ENCODE measurements at regions of chr11 and their contacts with region 1.

Region 1: DNA sequence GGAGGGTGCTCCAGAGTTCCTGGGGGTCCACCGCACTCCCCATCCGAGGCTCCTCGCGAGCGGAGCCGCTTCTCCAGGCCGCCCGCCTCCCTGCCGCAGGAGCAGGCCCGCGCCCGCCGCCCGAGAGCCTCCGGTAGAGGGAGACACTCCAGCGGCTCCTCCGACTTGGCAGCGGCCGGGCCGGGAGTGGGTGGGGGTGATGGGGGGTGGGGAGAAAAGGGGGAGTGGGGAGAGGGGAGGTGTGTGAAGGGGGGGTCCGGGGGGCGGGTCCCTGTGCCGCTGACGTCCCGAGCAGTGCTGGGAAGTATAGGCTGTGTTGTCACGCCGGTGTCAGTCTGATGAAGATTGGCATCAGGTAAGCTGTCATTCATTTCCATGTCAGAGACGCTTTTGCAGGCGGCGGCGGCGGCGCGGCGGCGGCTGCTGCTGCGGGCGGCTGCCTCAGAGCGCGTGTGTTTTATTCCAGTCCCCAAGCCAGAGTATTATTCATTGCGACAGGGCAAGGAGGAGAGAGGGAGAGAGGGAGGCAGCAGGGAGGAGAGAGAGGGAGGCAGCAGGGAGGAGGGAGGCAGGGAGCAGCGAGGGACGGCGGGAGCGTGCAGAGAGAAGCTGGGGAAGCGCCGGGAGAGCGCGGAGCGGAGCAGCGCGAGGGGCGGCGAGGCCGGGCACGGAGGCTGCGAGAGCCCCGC is at the start of gene PKNOX2:
- DNase-seq: peak; percentile 42 to 78 (median 53)
- H3K4me3 ChIP-seq: peak within 1 kb of the TSS in 1 of 2 donors; percentile 41
- H3K4me3 Mint-ChIP-seq: peak within 1 kb of the TSS; percentile 89 to 100 (median 91)
- H3K27ac ChIP-seq: no peak within 1 kb of the TSS
- H3K27ac Mint-ChIP-seq: peak within 1 kb of the TSS in 3 of 7 donors; percentile 23 to 78 (median 70)
- H3K4me1 ChIP-seq: peaks cover 22% of the 10 kb centered on the region
- H3K4me1 Mint-ChIP-seq: peaks cover 15 to 40% (median 22%) of the 10 kb centered on the region in 4 donors
- H3K27me3 ChIP-seq: peaks cover 33% of the 10 kb centered on the region
- H3K27me3 Mint-ChIP-seq: peaks cover 44 to 46% of the 10 kb centered on the region in 2 donors
- total RNA-seq, gene PKNOX2: not detected

Region 2: DNA sequence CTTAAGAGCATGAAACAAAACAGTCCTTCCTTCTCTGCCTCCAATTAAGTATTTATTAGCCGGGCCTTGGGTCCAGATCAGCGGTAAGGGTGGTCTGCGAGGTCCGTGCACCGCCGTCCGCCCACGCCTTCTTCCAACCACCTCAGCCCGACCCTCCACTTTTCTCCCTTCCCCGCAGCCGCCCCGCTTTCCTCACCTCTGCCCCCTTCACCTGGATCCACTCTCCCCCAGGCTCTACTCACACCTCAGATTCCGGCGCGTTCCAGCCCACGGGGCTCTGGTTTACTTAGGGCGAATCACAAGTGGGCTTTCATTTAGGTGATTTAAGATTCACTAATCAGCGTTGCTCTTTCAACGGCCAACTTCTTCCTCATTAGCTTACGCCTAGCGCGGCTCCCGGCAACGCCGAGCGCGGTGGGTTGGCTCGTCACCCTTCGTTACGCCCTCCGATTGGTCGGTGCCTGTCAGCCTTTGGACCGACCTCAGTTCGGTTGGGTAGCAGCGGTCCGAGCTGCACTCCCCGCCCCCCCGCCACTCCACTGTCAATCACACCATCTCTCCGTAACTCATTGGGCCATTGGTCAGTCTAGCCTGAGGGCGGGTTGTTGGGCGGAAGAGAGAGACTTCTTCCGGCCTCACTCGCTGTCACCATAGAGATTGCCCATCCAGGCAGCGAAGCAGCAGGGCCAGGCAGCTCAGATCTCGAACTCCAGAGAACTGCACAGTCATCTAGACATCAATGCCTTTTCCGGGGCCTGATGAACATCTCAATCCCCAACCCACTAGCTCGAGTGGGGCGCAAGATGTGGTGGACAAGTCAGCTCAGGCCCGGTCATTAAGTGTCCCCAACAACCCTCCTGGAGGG is 53.0 kb before region 1 on chr11 and contains the start of gene TMEM218:
- CTCF ChIA-PET with region 1: no interaction called
- POLR2A ChIA-PET with region 1: interaction called, 4 read pairs
- intact Hi-C with region 1: loop called (anchors 2 kb)
- DNase-seq: peak; percentile 94 to 97 (median 96)
- H3K4me3 ChIP-seq: peak within 1 kb of the TSS; percentile 72 to 89
- H3K4me3 Mint-ChIP-seq: peak within 1 kb of the TSS; percentile 92 to 100 (median 98)
- H3K27ac ChIP-seq: peak within 1 kb of the TSS; percentile 68
- H3K27ac Mint-ChIP-seq: peak within 1 kb of the TSS; percentile 74 to 99 (median 97)
- H3K4me1 ChIP-seq: peaks cover 18% of the 10 kb centered on the region
- H3K4me1 Mint-ChIP-seq: peaks cover 4 to 25% (median 18%) of the 10 kb centered on the region in 4 donors
- H3K27me3 ChIP-seq: no peaks in the 10 kb centered on the region
- H3K27me3 Mint-ChIP-seq: no peaks in the 10 kb centered on the region
- total RNA-seq, gene TMEM218: 15.1 to 16.6 TPM

Region 3: GRCh38 chr11:125180413-125181305 is 16.1 kb after region 1 on chr11:
- CTCF ChIA-PET with region 1: no interaction called
- POLR2A ChIA-PET with region 1: no interaction called
- intact Hi-C with region 1: no loop called
- DNase-seq: no peak
- H3K4me3 ChIP-seq: no peak overlapping the region
- H3K4me3 Mint-ChIP-seq: no peak overlapping the region
- H3K27ac ChIP-seq: no peak overlapping the region
- H3K27ac Mint-ChIP-seq: peak overlapping the region in 1 of 7 donors; percentile 44
- H3K4me1 ChIP-seq: no peaks in the 10 kb centered on the region
- H3K4me1 Mint-ChIP-seq: no peaks in the 10 kb centered on the region
- H3K27me3 ChIP-seq: no peaks in the 10 kb centered on the region
- H3K27me3 Mint-ChIP-seq: peaks cover 18 to 32% of the 10 kb centered on the region in 2 donors

Region 4: GRCh38 chr11:125423247-125423849 is 258.8 kb after region 1 on chr11:
- CTCF ChIA-PET with region 1: no interaction called
- POLR2A ChIA-PET with region 1: no interaction called
- intact Hi-C with region 1: no loop called
- DNase-seq: peak in 1 of 5 donors; percentile 6
- H3K4me3 ChIP-seq: no peak overlapping the region
- H3K4me3 Mint-ChIP-seq: no peak overlapping the region
- H3K27ac ChIP-seq: no peak overlapping the region
- H3K27ac Mint-ChIP-seq: no peak overlapping the region
- H3K4me1 ChIP-seq: no peaks in the 10 kb centered on the region
- H3K4me1 Mint-ChIP-seq: peaks cover 0 to 4% (median under 1%) of the 10 kb centered on the region in 4 donors
- H3K27me3 ChIP-seq: no peaks in the 10 kb centered on the region
- H3K27me3 Mint-ChIP-seq: peaks cover 3 to 13% of the 10 kb centered on the region in 2 donors

Measured in CD4-positive, alpha-beta memory T cell (primary cell).